ENCODE measurements at regions of chr19 and their contacts with region 1.

Region 1: GRCh38 chr19:55599468-55600279 is at the start of gene FIZ1:
- DNase-seq: peak; percentile 96 to 98 (median 97)
- H3K4me3 ChIP-seq: peak within 1 kb of the TSS; percentile 93 to 99
- H3K4me3 Mint-ChIP-seq: peak within 1 kb of the TSS; percentile 98 to 100 (median 98)
- H3K27ac ChIP-seq: peak within 1 kb of the TSS; percentile 89
- H3K27ac Mint-ChIP-seq: peak within 1 kb of the TSS; percentile 96 to 100 (median 99)
- H3K4me1 ChIP-seq: peaks cover 28% of the 10 kb centered on the region
- H3K4me1 Mint-ChIP-seq: peaks cover 22 to 38% (median 25%) of the 10 kb centered on the region in 4 donors
- H3K27me3 ChIP-seq: no peaks in the 10 kb centered on the region
- H3K27me3 Mint-ChIP-seq: no peaks in the 10 kb centered on the region
- total RNA-seq, gene FIZ1: 20.8 to 26.4 TPM

Region 2: GRCh38 chr19:55080968-55081772 is 518.5 kb before region 1 on chr19:
- CTCF ChIA-PET with region 1: no interaction called
- POLR2A ChIA-PET with region 1: no interaction called
- intact Hi-C with region 1: loop called (anchors 2 kb)
- DNase-seq: peak; percentile 84 to 90 (median 86)
- H3K4me3 ChIP-seq: peak overlapping the region; percentile 77 to 86
- H3K4me3 Mint-ChIP-seq: peak overlapping the region; percentile 81 to 91 (median 84)
- H3K27ac ChIP-seq: peak overlapping the region; percentile 9
- H3K27ac Mint-ChIP-seq: peak overlapping the region; percentile 48 to 78 (median 68)
- H3K4me1 ChIP-seq: peaks cover 23% of the 10 kb centered on the region
- H3K4me1 Mint-ChIP-seq: peaks cover 12 to 39% (median 24%) of the 10 kb centered on the region in 4 donors
- H3K27me3 ChIP-seq: no peaks in the 10 kb centered on the region
- H3K27me3 Mint-ChIP-seq: peaks cover 25 to 53% of the 10 kb centered on the region in 2 donors

Region 3: GRCh38 chr19:55386530-55386971 is 213.1 kb before region 1 on chr19:
- CTCF ChIA-PET with region 1: no interaction called
- POLR2A ChIA-PET with region 1: no interaction called
- intact Hi-C with region 1: no loop called
- DNase-seq: no peak
- H3K4me3 ChIP-seq: peak overlapping the region; percentile 85 to 88
- H3K4me3 Mint-ChIP-seq: peak overlapping the region; percentile 99 to 100 (median 100)
- H3K27ac ChIP-seq: peak overlapping the region; percentile 94
- H3K27ac Mint-ChIP-seq: peak overlapping the region; percentile 98 to 100 (median 99)
- H3K4me1 ChIP-seq: peaks cover 68% of the 10 kb centered on the region
- H3K4me1 Mint-ChIP-seq: peaks cover 37 to 89% (median 66%) of the 10 kb centered on the region in 4 donors
- H3K27me3 ChIP-seq: no peaks in the 10 kb centered on the region
- H3K27me3 Mint-ChIP-seq: no peaks in the 10 kb centered on the region

Region 4: DNA sequence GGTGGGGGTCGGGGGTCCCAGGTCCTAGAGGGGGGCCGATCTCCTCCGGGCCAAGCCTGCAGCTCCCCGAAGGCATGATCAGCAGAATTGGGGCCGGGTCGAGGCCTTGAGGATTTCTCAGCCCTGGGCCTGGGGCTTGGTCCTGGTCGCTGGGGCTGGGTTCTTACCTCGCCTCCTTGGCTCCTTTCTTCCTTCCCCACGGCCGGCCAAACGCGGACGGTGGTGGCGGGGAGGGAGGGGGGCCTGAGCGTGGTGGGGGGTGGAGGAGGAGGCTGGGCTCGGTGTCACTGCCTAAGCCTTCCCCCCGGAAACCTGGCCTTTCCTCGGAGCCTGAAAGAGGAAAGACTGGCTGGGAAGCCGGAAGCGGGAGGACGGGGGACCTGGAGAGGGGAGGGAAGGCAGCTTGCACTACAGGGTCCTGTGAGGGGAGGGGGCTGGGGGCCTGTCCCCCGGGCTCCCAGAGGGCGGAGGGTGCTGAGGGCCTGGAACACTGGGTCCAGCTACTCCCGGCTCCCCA is 19.0 kb before region 1 on chr19 and contains the start of gene ZNF579:
- CTCF ChIA-PET with region 1: no interaction called
- POLR2A ChIA-PET with region 1: interaction called, 49 read pairs
- intact Hi-C with region 1: loop called (anchors 2 kb)
- DNase-seq: peak; percentile 58 to 78 (median 63)
- H3K4me3 ChIP-seq: peak within 1 kb of the TSS; percentile 61 to 68
- H3K4me3 Mint-ChIP-seq: peak within 1 kb of the TSS; percentile 81 to 97 (median 88)
- H3K27ac ChIP-seq: peak within 1 kb of the TSS; percentile 69
- H3K27ac Mint-ChIP-seq: peak within 1 kb of the TSS; percentile 86 to 95 (median 93)
- H3K4me1 ChIP-seq: peaks cover 21% of the 10 kb centered on the region
- H3K4me1 Mint-ChIP-seq: peaks cover 22 to 38% (median 25%) of the 10 kb centered on the region in 4 donors
- H3K27me3 ChIP-seq: no peaks in the 10 kb centered on the region
- H3K27me3 Mint-ChIP-seq: peaks cover 0 to 1% of the 10 kb centered on the region in 2 donors
- total RNA-seq, gene ZNF579: 8.0 to 9.6 TPM

Region 5: DNA sequence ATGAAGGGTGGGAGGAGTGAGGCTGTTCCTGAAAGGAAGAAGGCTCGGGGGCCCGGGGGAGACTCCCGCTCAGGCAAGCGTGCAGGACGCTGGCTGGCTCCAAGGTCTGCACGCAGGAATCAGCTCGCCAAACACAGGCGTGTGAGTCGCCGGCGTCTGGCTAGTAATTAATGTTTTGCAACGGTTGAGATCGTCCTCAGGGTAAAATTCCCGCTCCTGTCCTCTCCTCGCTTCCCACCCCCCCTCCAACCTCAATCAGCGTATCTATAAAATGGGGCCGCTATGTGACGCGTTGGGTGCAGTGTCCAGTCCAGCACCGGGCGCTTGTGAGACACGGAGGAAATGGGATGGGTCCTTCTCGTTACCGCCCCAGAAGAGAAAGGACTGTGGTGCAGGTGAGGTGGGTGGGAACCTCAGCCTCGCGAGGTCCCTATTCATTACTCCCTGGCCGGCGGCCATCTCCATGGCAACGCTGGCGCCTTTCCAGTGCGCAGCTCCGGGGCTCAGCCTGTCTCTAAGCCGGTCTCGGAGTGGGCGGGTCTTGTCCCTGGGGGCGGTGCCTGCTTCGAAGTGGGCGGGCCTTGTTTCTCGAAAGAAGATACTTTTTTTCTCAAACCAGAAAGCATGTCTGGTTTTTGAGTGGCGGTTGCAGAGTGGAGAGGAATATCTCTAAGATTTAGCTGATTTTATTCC is 12.6 kb before region 1 on chr19:
- CTCF ChIA-PET with region 1: no interaction called
- POLR2A ChIA-PET with region 1: interaction called, 49 read pairs
- intact Hi-C with region 1: loop called (anchors 1 kb)
- DNase-seq: peak; percentile 88 to 96 (median 91)
- H3K4me3 ChIP-seq: peak overlapping the region in 1 of 2 donors; percentile 60
- H3K4me3 Mint-ChIP-seq: peak overlapping the region; percentile 84 to 94 (median 87)
- H3K27ac ChIP-seq: no peak overlapping the region
- H3K27ac Mint-ChIP-seq: peak overlapping the region; percentile 85 to 93 (median 88)
- H3K4me1 ChIP-seq: peaks cover 29% of the 10 kb centered on the region
- H3K4me1 Mint-ChIP-seq: peaks cover 12 to 46% (median 28%) of the 10 kb centered on the region in 4 donors
- H3K27me3 ChIP-seq: no peaks in the 10 kb centered on the region
- H3K27me3 Mint-ChIP-seq: no peaks in the 10 kb centered on the region

Region 6: DNA sequence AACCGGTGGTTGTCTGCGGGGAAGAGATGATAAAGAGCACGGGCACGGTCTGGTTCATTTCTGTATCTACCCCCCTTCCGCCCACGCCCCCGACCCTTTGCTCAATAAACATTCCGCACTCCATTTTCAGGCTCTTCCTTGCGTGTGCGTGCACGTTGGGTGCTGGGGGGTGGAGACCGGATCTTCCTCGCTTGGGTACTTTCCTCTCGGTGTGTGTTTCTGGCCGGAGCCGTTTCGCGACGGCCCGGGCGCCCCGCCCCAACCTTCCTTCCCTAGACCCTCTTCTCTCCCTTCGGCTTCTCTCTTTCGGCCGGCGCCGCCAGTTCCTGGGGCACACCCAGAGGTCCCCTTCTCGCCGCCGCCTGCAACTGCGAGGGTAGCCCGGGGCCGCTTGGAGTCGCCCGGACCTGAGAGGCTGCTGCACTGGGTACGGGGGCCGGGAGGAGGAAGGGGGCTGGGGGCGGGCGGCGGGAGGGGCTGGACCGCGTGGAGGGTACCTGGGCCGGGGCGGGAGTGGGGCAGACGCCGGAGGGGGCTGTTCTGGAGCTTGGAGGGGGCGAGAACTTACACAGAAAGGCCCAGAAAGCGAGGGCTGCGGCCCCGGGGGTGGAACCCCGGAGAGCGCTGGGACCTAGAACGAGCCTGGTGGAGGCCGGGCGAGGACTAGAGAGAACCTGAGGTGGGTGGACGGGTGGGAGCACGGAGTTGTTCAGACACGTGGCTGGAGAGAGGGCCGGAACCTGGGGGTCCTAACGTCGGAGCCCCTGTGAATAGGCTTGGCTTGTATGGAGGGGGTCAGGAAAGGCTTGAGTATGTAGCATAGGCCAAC is 43.9 kb after region 1 on chr19 and contains the start of gene ZNF581:
- CTCF ChIA-PET with region 1: no interaction called
- POLR2A ChIA-PET with region 1: interaction called, 30 read pairs
- intact Hi-C with region 1: no loop called
- DNase-seq: peak; percentile 77 to 85 (median 79)
- H3K4me3 ChIP-seq: peak within 1 kb of the TSS; percentile 53 to 83
- H3K4me3 Mint-ChIP-seq: peak within 1 kb of the TSS; percentile 86 to 96 (median 92)
- H3K27ac ChIP-seq: peak within 1 kb of the TSS; percentile 69
- H3K27ac Mint-ChIP-seq: peak within 1 kb of the TSS; percentile 87 to 99 (median 94)
- H3K4me1 ChIP-seq: peaks cover 49% of the 10 kb centered on the region
- H3K4me1 Mint-ChIP-seq: peaks cover 29 to 62% (median 45%) of the 10 kb centered on the region in 4 donors
- H3K27me3 ChIP-seq: no peaks in the 10 kb centered on the region
- H3K27me3 Mint-ChIP-seq: no peaks in the 10 kb centered on the region
- total RNA-seq, gene ZNF581: 21.2 to 23.4 TPM

Region 7: GRCh38 chr19:55674841-55675660 is 75.4 kb after region 1 on chr19 and contains the start of gene EPN1:
- CTCF ChIA-PET with region 1: no interaction called
- POLR2A ChIA-PET with region 1: no interaction called
- intact Hi-C with region 1: loop called (anchors 2 kb)
- DNase-seq: peak; percentile 94 to 98 (median 97)
- H3K4me3 ChIP-seq: peak within 1 kb of the TSS; percentile 79 to 98
- H3K4me3 Mint-ChIP-seq: peak within 1 kb of the TSS; percentile 94 to 100 (median 97)
- H3K27ac ChIP-seq: peak within 1 kb of the TSS; percentile 94
- H3K27ac Mint-ChIP-seq: peak within 1 kb of the TSS; percentile 94 to 100 (median 99)
- H3K4me1 ChIP-seq: peaks cover 63% of the 10 kb centered on the region
- H3K4me1 Mint-ChIP-seq: peaks cover 32 to 74% (median 55%) of the 10 kb centered on the region in 4 donors
- H3K27me3 ChIP-seq: no peaks in the 10 kb centered on the region
- H3K27me3 Mint-ChIP-seq: no peaks in the 10 kb centered on the region
- total RNA-seq, gene EPN1: 53.9 to 56.9 TPM

Region 8: GRCh38 chr19:55902080-55902751 is 302.5 kb after region 1 on chr19:
- CTCF ChIA-PET with region 1: no interaction called
- POLR2A ChIA-PET with region 1: no interaction called
- intact Hi-C with region 1: no loop called
- DNase-seq: no peak
- H3K4me3 ChIP-seq: no peak overlapping the region
- H3K4me3 Mint-ChIP-seq: no peak overlapping the region
- H3K27ac ChIP-seq: no peak overlapping the region
- H3K27ac Mint-ChIP-seq: no peak overlapping the region
- H3K4me1 ChIP-seq: no peaks in the 10 kb centered on the region
- H3K4me1 Mint-ChIP-seq: no peaks in the 10 kb centered on the region
- H3K27me3 ChIP-seq: no peaks in the 10 kb centered on the region
- H3K27me3 Mint-ChIP-seq: peaks cover 2 to 3% of the 10 kb centered on the region in 2 donors

Region 9: GRCh38 chr19:56015756-56016155 is 416.1 kb after region 1 on chr19:
- CTCF ChIA-PET with region 1: no interaction called
- POLR2A ChIA-PET with region 1: no interaction called
- intact Hi-C with region 1: no loop called
- DNase-seq: no peak
- H3K4me3 ChIP-seq: no peak overlapping the region
- H3K4me3 Mint-ChIP-seq: no peak overlapping the region
- H3K27ac ChIP-seq: no peak overlapping the region
- H3K27ac Mint-ChIP-seq: no peak overlapping the region
- H3K4me1 ChIP-seq: no peaks in the 10 kb centered on the region
- H3K4me1 Mint-ChIP-seq: no peaks in the 10 kb centered on the region
- H3K27me3 ChIP-seq: no peaks in the 10 kb centered on the region
- H3K27me3 Mint-ChIP-seq: peaks cover 1 to 2% of the 10 kb centered on the region in 2 donors

Measured in CD4-positive, alpha-beta memory T cell (primary cell).